Activated CD4-positive, alpha-beta T cell treated with anti-CD3 and anti-CD28 coated beads, Interleukin-2, amount 10 ng/mL, durations not matched to agents 24 days and 14 days (primary cell): ENCODE measurements at regions of chr7 and their contacts with region 1.

Region 1: DNA sequence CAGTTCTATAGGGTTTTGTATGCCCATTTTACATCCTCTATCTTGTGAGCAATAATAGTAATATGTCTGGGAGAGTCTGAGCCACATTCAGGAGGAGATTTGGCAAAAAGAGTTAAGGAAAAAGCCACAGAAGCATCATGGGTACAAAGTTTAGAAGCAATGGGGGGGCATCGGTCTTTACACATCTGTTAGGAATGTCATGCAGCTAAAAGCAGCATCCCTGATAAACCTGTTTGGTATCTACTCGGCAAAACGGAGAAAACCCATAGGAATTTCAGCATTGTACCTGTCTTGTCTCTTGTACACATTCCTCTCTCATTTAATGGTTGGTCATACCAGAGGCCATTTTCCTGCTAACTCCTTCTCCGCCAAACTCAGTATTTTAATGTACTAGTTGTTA is 12.5 kb upstream of the HERPUD2 start:
- DNase-seq: no peak
- H3K4me3 Mint-ChIP-seq: no peak overlapping the region
- H3K27ac Mint-ChIP-seq: no peak overlapping the region
- H3K4me1 Mint-ChIP-seq: peaks cover 16% of the 10 kb centered on the region
- H3K27me3 Mint-ChIP-seq: peaks cover 9% of the 10 kb centered on the region

Region 2: GRCh38 chr7:35723011-35723410 is 15.6 kb after region 1 on chr7:
- intact Hi-C with region 1: loop called (anchors 1 kb)
- DNase-seq: no peak
- H3K4me3 Mint-ChIP-seq: peak overlapping the region; percentile 40
- H3K27ac Mint-ChIP-seq: peak overlapping the region; percentile 61
- H3K4me1 Mint-ChIP-seq: peaks cover 30% of the 10 kb centered on the region
- H3K27me3 Mint-ChIP-seq: peaks cover 12% of the 10 kb centered on the region

Region 3: GRCh38 chr7:35729061-35729783 is 21.8 kb after region 1 on chr7:
- intact Hi-C with region 1: loop called (anchors 2 kb)
- DNase-seq: peak; percentile 74
- H3K4me3 Mint-ChIP-seq: peak overlapping the region; percentile 39
- H3K27ac Mint-ChIP-seq: peak overlapping the region; percentile 48
- H3K4me1 Mint-ChIP-seq: peaks cover 44% of the 10 kb centered on the region
- H3K27me3 Mint-ChIP-seq: peaks cover 11% of the 10 kb centered on the region

Region 4: GRCh38 chr7:35816514-35816913 is 109.1 kb after region 1 on chr7:
- intact Hi-C with region 1: no loop called
- DNase-seq: peak; percentile 4
- H3K4me3 Mint-ChIP-seq: no peak overlapping the region
- H3K27ac Mint-ChIP-seq: no peak overlapping the region
- H3K4me1 Mint-ChIP-seq: peaks cover 53% of the 10 kb centered on the region
- H3K27me3 Mint-ChIP-seq: no peaks in the 10 kb centered on the region

Region 5: DNA sequence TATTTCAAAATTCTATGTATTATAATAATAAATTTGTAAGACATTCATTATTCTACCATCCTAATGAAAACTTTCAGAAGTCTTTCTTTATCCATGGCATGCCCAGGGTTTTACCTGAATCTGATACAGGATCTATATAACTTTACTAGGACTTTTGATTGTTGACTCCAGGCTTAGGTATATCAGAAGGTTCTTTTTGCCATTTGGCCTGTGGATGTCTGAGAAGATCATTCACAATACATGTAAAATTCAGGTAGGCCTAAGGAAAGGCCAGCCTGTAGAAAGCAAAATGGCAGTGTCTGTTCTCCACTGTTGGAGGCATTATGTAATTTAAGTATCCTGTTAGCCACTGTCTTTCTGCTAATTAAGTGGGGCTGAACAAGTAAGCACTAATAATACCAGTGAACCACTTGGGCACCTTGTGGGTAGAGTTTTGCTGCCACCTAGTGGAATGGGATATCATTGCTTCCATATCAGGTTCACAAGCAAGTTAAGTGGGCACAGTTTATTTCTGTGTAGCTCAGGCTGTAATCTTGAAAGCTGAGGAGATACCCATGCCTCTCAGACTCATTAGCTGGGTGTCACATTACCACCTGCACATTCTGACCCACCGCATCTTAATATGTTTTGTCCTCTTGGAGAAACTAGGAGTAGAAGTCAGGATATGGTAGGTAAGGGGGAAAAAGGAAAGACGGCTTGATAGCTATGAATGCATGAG is 198.9 kb after region 1 on chr7:
- intact Hi-C with region 1: loop called (anchors 1 kb)
- DNase-seq: peak; percentile 91
- H3K4me3 Mint-ChIP-seq: no peak overlapping the region
- H3K27ac Mint-ChIP-seq: no peak overlapping the region
- H3K4me1 Mint-ChIP-seq: no peaks in the 10 kb centered on the region
- H3K27me3 Mint-ChIP-seq: no peaks in the 10 kb centered on the region